Transverse colon (tissue), 4 donors: ENCODE measurements at regions of chr1 and their contacts with region 1.

Region 1: GRCh38 chr1:236489710-236490377 is 33.9 kb upstream of the LGALS8 start:
- DNase-seq: no peak
- H3K4me3 ChIP-seq: no peak overlapping the region
- H3K27ac ChIP-seq: no peak overlapping the region
- H3K4me1 ChIP-seq: no peaks in the 10 kb centered on the region
- H3K27me3 ChIP-seq: no peaks in the 10 kb centered on the region
- CTCF ChIP-seq: peak; percentile 58 to 70 (median 62)
- EP300 ChIP-seq: no peak
- POLR2A ChIP-seq: no peak

Region 2: GRCh38 chr1:236113324-236114032 is 376.4 kb before region 1 on chr1:
- in situ Hi-C with region 1: loop called in 3 of 4 experiments (anchors 5 to 10 kb)
- intact Hi-C with region 1: no loop called
- DNase-seq: no peak
- H3K4me3 ChIP-seq: no peak overlapping the region
- H3K27ac ChIP-seq: no peak overlapping the region
- H3K4me1 ChIP-seq: no peaks in the 10 kb centered on the region
- H3K27me3 ChIP-seq: no peaks in the 10 kb centered on the region
- CTCF ChIP-seq: no peak
- EP300 ChIP-seq: no peak
- POLR2A ChIP-seq: no peak

Region 3: DNA sequence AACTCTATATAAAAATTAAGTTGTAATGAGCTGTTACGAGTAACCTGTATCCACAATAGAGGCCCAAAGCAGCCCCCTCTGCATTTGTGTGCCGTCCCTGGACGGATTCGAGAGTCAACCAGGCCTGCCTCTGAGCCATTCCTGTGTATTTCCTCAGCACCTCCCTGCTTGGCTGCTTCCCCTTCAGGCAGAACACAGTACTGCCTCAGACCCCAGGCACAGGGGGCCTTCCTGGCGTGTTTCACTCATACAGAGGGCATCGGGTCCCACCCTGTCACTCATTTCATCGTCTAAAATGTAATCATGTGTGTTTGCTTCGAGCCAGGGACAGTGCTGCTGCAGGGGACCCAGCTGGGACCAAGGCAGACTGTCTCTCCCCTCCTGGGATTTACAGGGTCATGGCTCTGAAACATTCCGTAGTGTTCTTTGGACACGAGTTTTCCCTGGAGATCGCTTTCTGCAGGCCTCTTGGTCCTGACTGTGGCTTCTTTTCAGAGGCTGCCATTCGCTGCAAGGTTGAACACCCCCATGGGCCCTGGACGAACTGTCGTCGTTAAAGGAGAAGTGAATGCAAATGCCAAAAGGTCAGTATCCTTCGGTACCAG is 53.3 kb after region 1 on chr1:
- in situ Hi-C with region 1: no loop called
- intact Hi-C with region 1: no loop called
- DNase-seq: no peak
- H3K4me3 ChIP-seq: no peak overlapping the region
- H3K27ac ChIP-seq: no peak overlapping the region
- H3K4me1 ChIP-seq: peaks cover 0 to 5% (median 0%) of the 10 kb centered on the region in 4 donors
- H3K27me3 ChIP-seq: no peaks in the 10 kb centered on the region
- CTCF ChIP-seq: no peak
- EP300 ChIP-seq: no peak
- POLR2A ChIP-seq: no peak

Region 4: GRCh38 chr1:236786453-236786852 is 296.6 kb after region 1 on chr1:
- in situ Hi-C with region 1: no loop called
- intact Hi-C with region 1: no loop called
- DNase-seq: no peak
- H3K4me3 ChIP-seq: no peak overlapping the region
- H3K27ac ChIP-seq: no peak overlapping the region
- H3K4me1 ChIP-seq: no peaks in the 10 kb centered on the region
- H3K27me3 ChIP-seq: no peaks in the 10 kb centered on the region
- CTCF ChIP-seq: no peak
- EP300 ChIP-seq: no peak
- POLR2A ChIP-seq: no peak